Activated CD8-positive, alpha-beta T cell treated with anti-CD3 and anti-CD28 coated beads, Interleukin-2, amount 10 ng/mL, durations not matched to agents 7 days and 5 days (primary cell): ENCODE measurements at regions of chr19 and their contacts with region 1.

Region 1: GRCh38 chr19:3304871-3305423 is 61.4 kb upstream of the NFIC start:
- DNase-seq: peak; percentile 87
- ATAC-seq: peak; percentile 61
- H3K4me3 Mint-ChIP-seq: no peak overlapping the region
- H3K27ac Mint-ChIP-seq: no peak overlapping the region
- H3K4me1 Mint-ChIP-seq: peaks cover 4% of the 10 kb centered on the region
- H3K27me3 Mint-ChIP-seq: peaks cover 3% of the 10 kb centered on the region

Region 2: GRCh38 chr19:3275583-3276340 is 29.2 kb before region 1 on chr19:
- CTCF ChIA-PET with region 1: interaction called, 16 read pairs
- POLR2A ChIA-PET with region 1: no interaction called
- DNase-seq: peak; percentile 94
- ATAC-seq: peak; percentile 88
- H3K4me3 Mint-ChIP-seq: peak overlapping the region; percentile 77
- H3K27ac Mint-ChIP-seq: peak overlapping the region; percentile 91
- H3K4me1 Mint-ChIP-seq: peaks cover 18% of the 10 kb centered on the region
- H3K27me3 Mint-ChIP-seq: peaks cover 14% of the 10 kb centered on the region

Region 3: GRCh38 chr19:3429581-3430080 is 124.7 kb after region 1 on chr19:
- CTCF ChIA-PET with region 1: interaction called, 17 read pairs
- POLR2A ChIA-PET with region 1: no interaction called
- DNase-seq: peak; percentile 79
- ATAC-seq: peak; percentile 76
- H3K4me3 Mint-ChIP-seq: no peak overlapping the region
- H3K27ac Mint-ChIP-seq: no peak overlapping the region
- H3K4me1 Mint-ChIP-seq: peaks cover 8% of the 10 kb centered on the region
- H3K27me3 Mint-ChIP-seq: no peaks in the 10 kb centered on the region

Region 4: GRCh38 chr19:3440082-3440481 is 135.1 kb after region 1 on chr19:
- CTCF ChIA-PET with region 1: interaction called, 10 read pairs
- POLR2A ChIA-PET with region 1: no interaction called
- DNase-seq: peak; percentile 61
- ATAC-seq: peak; percentile 30
- H3K4me3 Mint-ChIP-seq: no peak overlapping the region
- H3K27ac Mint-ChIP-seq: no peak overlapping the region
- H3K4me1 Mint-ChIP-seq: peaks cover 16% of the 10 kb centered on the region
- H3K27me3 Mint-ChIP-seq: no peaks in the 10 kb centered on the region

Region 5: GRCh38 chr19:3471954-3472655 is 167.2 kb after region 1 on chr19:
- CTCF ChIA-PET with region 1: interaction called, 12 read pairs
- POLR2A ChIA-PET with region 1: no interaction called
- DNase-seq: peak; percentile 42
- ATAC-seq: peak; percentile 41
- H3K4me3 Mint-ChIP-seq: no peak overlapping the region
- H3K27ac Mint-ChIP-seq: no peak overlapping the region
- H3K4me1 Mint-ChIP-seq: no peaks in the 10 kb centered on the region
- H3K27me3 Mint-ChIP-seq: no peaks in the 10 kb centered on the region

Region 6: DNA sequence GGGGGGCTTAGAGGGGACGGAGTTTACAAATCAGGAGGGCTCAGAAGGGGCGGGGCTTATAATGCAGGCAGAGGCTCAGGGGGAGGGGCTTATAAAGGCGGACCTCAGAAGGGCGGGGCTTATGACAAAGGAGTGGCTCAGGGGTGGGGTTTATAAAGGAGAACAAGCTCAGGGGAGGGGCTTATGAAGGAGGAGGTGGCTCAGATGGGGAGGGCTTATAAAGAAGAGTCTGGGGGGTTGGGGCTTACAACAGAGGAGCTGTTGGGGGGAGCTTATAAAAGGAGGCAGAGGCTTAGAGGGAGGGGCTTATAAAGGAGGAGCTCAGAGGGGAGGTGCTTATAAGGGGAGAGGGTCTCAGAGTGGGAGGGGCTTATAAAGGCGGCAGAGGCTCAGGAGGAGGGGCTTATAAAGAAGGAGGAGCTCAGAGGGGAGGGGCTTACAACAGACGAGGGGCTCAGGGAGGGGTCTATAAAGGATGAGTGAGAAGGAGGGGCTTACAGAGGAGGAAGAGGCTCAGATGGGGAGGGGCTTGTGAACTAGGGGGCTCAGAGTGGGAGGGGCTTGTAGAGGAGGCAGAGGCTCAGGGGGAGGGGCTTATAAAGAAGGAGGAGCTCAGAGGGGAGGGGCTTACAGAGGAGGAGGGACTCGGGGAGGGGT is 174.4 kb after region 1 on chr19:
- CTCF ChIA-PET with region 1: interaction called, 12 read pairs
- POLR2A ChIA-PET with region 1: no interaction called
- DNase-seq: peak; percentile 84
- ATAC-seq: peak; percentile 64
- H3K4me3 Mint-ChIP-seq: peak overlapping the region; percentile 68
- H3K27ac Mint-ChIP-seq: peak overlapping the region; percentile 87
- H3K4me1 Mint-ChIP-seq: peaks cover 16% of the 10 kb centered on the region
- H3K27me3 Mint-ChIP-seq: no peaks in the 10 kb centered on the region

Region 7: GRCh38 chr19:3632739-3633558 is 328.0 kb after region 1 on chr19:
- CTCF ChIA-PET with region 1: no interaction called
- POLR2A ChIA-PET with region 1: no interaction called
- DNase-seq: no peak
- ATAC-seq: no peak
- H3K4me3 Mint-ChIP-seq: no peak overlapping the region
- H3K27ac Mint-ChIP-seq: no peak overlapping the region
- H3K4me1 Mint-ChIP-seq: no peaks in the 10 kb centered on the region
- H3K27me3 Mint-ChIP-seq: no peaks in the 10 kb centered on the region